ENCODE measurements at regions of chr2 and their contacts with region 1.

Region 1: DNA sequence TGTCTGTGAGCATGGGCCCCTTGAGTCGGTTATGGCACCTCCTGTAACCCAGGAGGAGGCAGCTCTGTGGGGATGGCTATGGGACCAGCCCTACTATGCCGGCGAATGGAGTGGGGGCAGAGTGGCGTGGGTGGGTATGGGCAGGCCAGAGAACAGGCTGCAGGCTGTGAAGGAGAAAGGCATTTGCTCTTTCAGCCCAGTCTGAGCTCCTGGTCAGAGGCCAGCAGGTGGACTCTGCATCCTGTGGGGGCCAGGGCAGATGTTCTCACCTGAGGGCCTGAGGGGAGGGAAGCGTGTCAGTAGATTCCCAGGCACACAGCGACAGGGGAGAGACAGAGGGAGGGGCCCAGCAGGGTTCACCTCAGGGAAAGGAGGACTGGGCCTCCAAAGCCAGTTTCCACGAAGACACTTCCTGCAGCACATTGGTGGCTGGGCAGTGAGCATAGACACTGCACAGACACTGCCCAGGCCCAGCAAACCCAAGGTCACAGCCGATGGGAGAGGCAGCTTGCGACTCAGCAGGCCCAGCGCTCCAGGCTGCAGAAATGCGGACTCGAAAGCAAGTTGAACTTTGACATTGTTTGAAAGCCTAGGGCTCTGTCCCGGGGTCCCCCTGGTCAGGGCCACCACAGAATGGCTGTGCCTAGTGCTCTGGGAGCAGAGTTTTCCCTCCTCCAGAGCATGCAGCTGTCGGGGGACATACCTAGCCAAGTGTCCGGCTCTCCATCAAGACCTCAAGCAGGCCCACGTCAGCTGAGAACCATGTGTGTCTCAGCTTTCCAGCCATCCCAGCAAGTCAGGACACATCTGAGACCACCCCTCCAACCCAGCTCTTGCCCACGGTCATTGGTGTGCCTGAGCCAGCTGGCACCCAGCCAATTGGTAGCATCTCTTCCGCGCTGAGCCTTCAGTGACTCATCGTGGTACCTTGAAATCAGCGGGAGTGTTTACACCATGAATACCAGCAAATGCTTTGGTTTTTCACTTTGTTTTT is 53.8 kb downstream of the TGOLN2 start:
- DNase-seq: no peak

Region 2: DNA sequence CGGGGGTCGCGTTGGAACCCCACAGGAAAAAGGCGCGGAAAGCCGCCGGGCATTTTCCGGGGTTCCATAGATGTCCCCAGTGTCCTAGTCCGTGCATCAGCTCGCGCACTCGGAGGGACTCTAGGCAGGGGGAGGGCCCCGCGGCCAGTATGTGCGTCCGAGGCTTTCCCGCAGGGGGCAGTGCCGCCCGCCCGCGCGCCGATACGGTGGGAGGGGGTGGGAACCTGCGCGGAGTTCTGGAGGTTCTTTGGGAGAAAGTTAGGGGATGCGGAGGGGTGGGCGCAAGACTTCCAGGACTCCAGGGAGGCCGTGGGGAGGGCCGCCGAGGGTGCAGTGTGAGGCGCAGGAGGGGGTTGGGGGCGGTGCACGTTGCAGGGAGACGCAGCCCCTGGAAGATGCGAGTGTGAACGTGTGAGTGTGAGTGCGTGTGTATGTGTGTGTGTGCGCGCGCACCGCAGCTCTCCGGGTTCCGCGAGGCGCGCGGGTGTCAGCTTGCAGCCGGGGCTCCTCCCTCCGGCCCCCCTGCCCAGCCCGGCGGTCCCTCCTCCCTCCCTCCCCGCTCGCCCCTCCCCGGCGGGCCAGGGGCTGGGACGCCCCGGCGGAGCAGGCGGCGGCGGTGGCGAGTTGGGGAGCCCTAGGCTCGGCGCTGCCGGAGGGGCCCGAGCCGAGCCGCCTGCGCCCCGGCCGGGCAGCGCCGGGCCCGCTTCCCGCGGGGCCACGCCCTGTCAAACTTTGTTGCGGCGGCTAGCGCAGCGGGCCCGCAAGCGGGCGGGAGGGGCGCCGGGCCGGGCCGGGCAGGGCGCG is 141.0 kb before region 1 on chr2 and contains the start of gene TCF7L1:
- intact Hi-C with region 1: loop called in 1 of 2 experiments (anchors 10 kb)
- DNase-seq: peak; percentile 93
- total RNA-seq, gene TCF7L1: 23.1 to 25.9 TPM

Region 3: GRCh38 chr2:85308896-85309555 is 35.0 kb after region 1 on chr2:
- intact Hi-C with region 1: loop called in 1 of 2 experiments (anchors 1 kb)
- DNase-seq: peak; percentile 89

Region 4: GRCh38 chr2:85319796-85320195 is 45.8 kb after region 1 on chr2:
- intact Hi-C with region 1: no loop called
- DNase-seq: no peak